Left colon (tissue), 2 donors: ENCODE measurements at regions of chr16 and their contacts with region 1.

Region 1: GRCh38 chr16:73196670-73197069 is 148.7 kb upstream of the ZFHX3 start:
- DNase-seq: peak; percentile 66 to 70
- ATAC-seq: peak; percentile 86

Region 2: DNA sequence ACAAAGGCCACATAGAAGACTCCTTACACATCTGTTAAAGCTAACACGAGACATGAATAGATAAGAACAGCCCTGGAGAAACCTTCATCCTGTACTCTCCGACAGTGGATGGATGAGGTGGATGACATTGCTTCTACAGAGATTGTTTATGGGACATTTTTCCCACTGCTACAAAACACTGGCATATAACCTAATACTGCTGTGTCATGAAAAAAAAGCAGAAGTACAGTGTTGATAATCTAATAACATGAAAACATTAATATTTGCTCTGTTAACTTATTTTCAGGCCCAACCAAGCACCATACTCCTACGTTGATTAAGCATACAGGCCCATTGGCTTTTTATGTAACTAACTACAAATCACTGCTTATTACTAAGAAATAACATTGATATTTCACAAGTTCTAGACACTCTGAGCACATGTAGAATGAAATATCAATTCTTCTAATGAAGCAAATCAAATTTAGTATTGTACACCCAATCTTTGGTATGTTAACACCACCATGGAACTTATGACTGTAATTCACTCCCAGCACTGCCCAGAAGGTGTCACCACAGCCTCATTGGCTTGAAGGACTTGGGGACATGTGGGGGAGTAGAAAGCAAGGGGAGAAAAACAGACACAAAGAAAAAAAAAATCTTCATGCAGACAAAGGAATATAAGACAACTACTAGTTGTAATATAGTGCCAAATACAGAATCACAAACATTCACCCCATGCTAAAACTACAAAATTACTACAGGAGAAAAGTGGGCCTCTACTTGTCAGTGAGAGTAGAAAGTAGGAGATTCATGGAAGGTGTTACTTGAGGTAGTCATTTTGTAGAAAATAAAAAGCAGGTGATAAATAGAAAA is 694.7 kb before region 1 on chr16:
- intact Hi-C with region 1: loop called in 1 of 2 experiments (anchors 5 kb)
- DNase-seq: peak; percentile 27 to 60
- ATAC-seq: peak; percentile 86

Region 3: DNA sequence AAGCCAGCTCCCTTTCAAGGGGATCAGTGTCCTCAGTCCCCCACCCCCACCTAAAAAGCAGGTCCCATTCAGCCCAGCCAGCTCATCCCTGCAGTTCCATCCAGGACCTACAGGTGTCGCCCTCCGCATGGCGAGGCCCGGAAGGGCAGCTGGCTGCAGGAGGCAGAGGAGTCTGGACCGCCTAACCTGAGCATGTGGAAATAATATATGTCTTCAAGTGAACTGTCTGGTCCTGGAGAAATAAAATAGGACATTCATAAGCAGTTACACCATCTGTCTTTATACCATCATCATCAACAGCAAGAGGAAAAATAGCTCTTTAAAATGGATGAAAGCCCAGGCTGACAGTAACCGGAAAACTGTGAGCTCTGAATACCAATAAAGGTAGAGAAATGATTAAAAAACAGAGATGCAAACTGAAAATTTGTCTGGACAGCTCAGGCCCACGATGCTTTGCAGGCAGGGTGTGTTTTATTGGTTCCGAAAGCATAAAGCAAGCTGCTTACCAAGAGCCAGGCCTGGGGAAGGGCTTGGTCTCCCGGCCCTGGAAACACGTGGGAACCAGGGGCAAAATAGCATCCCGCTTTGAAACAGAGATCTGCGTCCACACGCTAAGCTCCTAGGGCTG is 363.9 kb before region 1 on chr16:
- intact Hi-C with region 1: loop called in 1 of 2 experiments (anchors 10 kb)
- DNase-seq: peak; percentile 65 to 83
- ATAC-seq: peak; percentile 86